HepG2 (cell line): ENCODE measurements at regions of chr4 and their contacts with region 1.

Region 1: GRCh38 chr4:167021545-167022155 is 212.6 kb downstream of the SPOCK3 start:
- DNase-seq: peak; percentile 39
- ATAC-seq: peak; percentile 87
- H3K4me3 ChIP-seq: no peak overlapping the region
- H3K27ac ChIP-seq: no peak overlapping the region
- H3K4me1 ChIP-seq: no peaks in the 10 kb centered on the region
- H3K27me3 ChIP-seq: no peaks in the 10 kb centered on the region; a peak in 1 of 5 replicates
- CTCF ChIP-seq: peak; percentile 74
- EP300 ChIP-seq: no peak
- POLR2A ChIP-seq: no peak
- RAD21 ChIP-seq: peak; percentile 35; the same call in 1 of the 2 replicates

Region 2: GRCh38 chr4:167290678-167291077 is 269.0 kb after region 1 on chr4:
- CTCF ChIA-PET with region 1: interaction called, 21 read pairs
- POLR2A ChIA-PET with region 1: no interaction called
- in situ Hi-C with region 1: loop called (anchors 5 kb)
- intact Hi-C with region 1: loop called (anchors 1 kb)
- DNase-seq: no peak
- ATAC-seq: no peak
- H3K4me3 ChIP-seq: no peak overlapping the region
- H3K27ac ChIP-seq: no peak overlapping the region
- H3K4me1 ChIP-seq: no peaks in the 10 kb centered on the region
- H3K27me3 ChIP-seq: no peaks in the 10 kb centered on the region; a peak in 1 of 5 replicates
- CTCF ChIP-seq: 0 out of 2 replicates have a peak, but pooled peaks have one; percentile 15
- EP300 ChIP-seq: no peak
- POLR2A ChIP-seq: no peak
- RAD21 ChIP-seq: no peak

Region 3: GRCh38 chr4:167622481-167623246 is 601.0 kb after region 1 on chr4:
- CTCF ChIA-PET with region 1: no interaction called
- POLR2A ChIA-PET with region 1: no interaction called
- in situ Hi-C with region 1: no loop called
- intact Hi-C with region 1: loop called (anchors 1 kb)
- DNase-seq: peak; percentile 10
- ATAC-seq: peak; percentile 92
- H3K4me3 ChIP-seq: no peak overlapping the region
- H3K27ac ChIP-seq: no peak overlapping the region
- H3K4me1 ChIP-seq: peaks cover 6% of the 10 kb centered on the region; the same call in 1 of the 2 replicates
- H3K27me3 ChIP-seq: no peaks in the 10 kb centered on the region
- CTCF ChIP-seq: peak; percentile 64
- EP300 ChIP-seq: no peak
- POLR2A ChIP-seq: no peak
- RAD21 ChIP-seq: no peak

Region 4: GRCh38 chr4:168076989-168077725 is 1055.5 kb after region 1 on chr4:
- CTCF ChIA-PET with region 1: interaction called, 17 read pairs
- POLR2A ChIA-PET with region 1: no interaction called
- in situ Hi-C with region 1: loop called (anchors 25 kb)
- intact Hi-C with region 1: no loop called
- DNase-seq: peak; percentile 44
- ATAC-seq: peak; percentile 77
- H3K4me3 ChIP-seq: no peak overlapping the region
- H3K27ac ChIP-seq: no peak overlapping the region
- H3K4me1 ChIP-seq: no peaks in the 10 kb centered on the region
- H3K27me3 ChIP-seq: no peaks in the 10 kb centered on the region
- CTCF ChIP-seq: peak; percentile 79
- EP300 ChIP-seq: no peak
- POLR2A ChIP-seq: no peak
- RAD21 ChIP-seq: peak; percentile 20; the same call in 1 of the 2 replicates

Region 5: DNA sequence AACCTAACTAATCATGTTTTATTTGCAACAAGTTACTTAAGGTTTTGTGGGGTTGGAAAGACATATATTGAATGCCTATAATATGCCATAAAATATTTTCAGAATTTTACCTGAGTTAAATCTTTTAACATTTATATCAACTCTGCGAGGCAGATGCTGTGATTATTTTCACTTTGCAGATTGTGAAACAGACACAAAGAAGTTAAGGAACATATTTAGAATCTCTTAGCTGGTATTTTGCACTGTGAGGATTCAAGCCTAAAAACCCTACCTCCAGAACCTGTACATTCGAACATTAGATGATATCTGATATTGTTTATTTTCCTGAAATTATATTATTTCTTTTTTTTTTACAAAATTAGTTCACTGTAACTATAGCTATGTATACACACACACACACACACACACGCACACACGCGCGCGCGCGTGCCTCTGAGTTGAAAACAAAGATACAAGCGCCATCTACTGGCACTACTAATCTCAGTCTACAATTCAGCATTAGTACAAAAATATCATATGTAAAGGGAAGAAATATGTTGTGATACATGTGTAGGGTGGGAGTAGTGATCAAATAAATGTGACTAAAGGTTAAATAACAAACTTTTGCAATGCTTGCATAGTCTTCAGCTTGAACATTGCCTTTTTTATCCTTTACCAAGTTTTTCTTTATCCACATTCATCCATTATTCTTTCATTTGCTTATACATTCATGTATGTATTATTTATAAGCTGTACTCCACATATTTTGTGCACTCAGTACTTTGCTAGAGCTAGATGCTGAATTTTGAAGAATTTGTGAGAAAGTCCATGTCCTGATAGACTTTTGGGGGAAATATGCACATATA is 1132.2 kb after region 1 on chr4:
- CTCF ChIA-PET with region 1: interaction called, 4 read pairs
- POLR2A ChIA-PET with region 1: no interaction called
- in situ Hi-C with region 1: no loop called
- intact Hi-C with region 1: loop called (anchors 5 kb)
- DNase-seq: peak; percentile 53
- ATAC-seq: peak; percentile 88
- H3K4me3 ChIP-seq: peak overlapping the region in 1 of 3 experiments; percentile 47; a peak in 2 of 6 replicates
- H3K27ac ChIP-seq: no peak overlapping the region
- H3K4me1 ChIP-seq: no peaks in the 10 kb centered on the region
- H3K27me3 ChIP-seq: no peaks in the 10 kb centered on the region
- CTCF ChIP-seq: peak; percentile 75
- EP300 ChIP-seq: no peak
- POLR2A ChIP-seq: no peak
- RAD21 ChIP-seq: no peak

Region 6: GRCh38 chr4:168528131-168528949 is 1506.7 kb after region 1 on chr4:
- CTCF ChIA-PET with region 1: no interaction called
- POLR2A ChIA-PET with region 1: no interaction called
- in situ Hi-C with region 1: no loop called
- intact Hi-C with region 1: no loop called
- DNase-seq: no peak
- ATAC-seq: no peak
- H3K4me3 ChIP-seq: no peak overlapping the region
- H3K27ac ChIP-seq: no peak overlapping the region
- H3K4me1 ChIP-seq: no peaks in the 10 kb centered on the region
- H3K27me3 ChIP-seq: no peaks in the 10 kb centered on the region
- CTCF ChIP-seq: no peak
- EP300 ChIP-seq: no peak
- POLR2A ChIP-seq: no peak
- RAD21 ChIP-seq: no peak